ENCODE measurements at regions of chr11 and their contacts with region 1.

Region 1: GRCh38 chr11:114180301-114181055 is 115.7 kb upstream of the NNMT start:
- DNase-seq: peak; percentile 61
- H3K4me3 Mint-ChIP-seq: peak overlapping the region; percentile 74
- H3K27ac Mint-ChIP-seq: peak overlapping the region; percentile 99
- H3K4me1 Mint-ChIP-seq: peaks cover 81% of the 10 kb centered on the region
- H3K27me3 Mint-ChIP-seq: no peaks in the 10 kb centered on the region
- CTCF ChIP-seq: peak; percentile 70

Region 2: DNA sequence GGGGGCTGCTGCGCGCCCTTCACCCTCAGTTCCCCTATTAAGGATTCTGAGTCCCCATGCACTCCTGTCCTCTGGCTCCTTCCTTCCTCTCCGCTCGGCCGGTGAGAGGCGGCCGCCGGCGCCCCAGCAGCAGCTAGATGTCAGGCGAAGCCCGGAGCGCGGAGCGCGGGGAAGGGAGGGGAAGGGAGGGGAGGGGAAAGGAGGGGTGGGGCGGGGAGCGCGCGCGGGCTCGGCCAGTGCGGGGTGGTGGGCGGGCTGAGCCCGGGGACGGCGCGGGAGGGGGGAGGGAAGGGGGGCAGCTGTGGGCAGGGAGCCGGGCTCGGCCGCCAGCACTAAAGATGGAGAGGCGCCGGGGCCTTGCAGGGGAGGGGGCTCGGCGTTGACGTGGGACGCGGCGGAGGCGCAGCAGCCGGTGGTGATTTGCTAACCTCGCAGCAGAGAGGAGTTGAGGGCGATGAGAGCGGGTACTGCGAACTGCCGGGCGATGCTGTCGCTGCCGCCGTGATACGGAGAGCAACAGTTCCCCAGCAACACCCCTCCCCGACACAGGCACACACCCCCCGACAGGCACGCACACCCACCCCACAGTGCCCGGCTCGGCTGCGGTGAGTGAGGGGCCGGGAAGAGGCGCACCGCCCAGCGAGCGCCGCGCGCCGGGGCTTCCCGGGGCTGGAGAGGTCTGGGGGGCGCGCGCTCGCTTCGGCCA is 121.0 kb before region 1 on chr11 and contains the start of gene ZBTB16:
- CTCF ChIA-PET with region 1: interaction called, 7 read pairs
- POLR2A ChIA-PET with region 1: interaction called, 57 read pairs
- intact Hi-C with region 1: loop called (anchors 1 kb)
- DNase-seq: peak; percentile 86
- H3K4me3 Mint-ChIP-seq: peak within 1 kb of the TSS; percentile 95
- H3K27ac Mint-ChIP-seq: peak within 1 kb of the TSS; percentile 98
- H3K4me1 Mint-ChIP-seq: peaks cover 12% of the 10 kb centered on the region
- H3K27me3 Mint-ChIP-seq: no peaks in the 10 kb centered on the region
- CTCF ChIP-seq: peak; percentile 28
- total RNA-seq, gene ZBTB16: 70.4 and 75.3 TPM in 2 replicates

Region 3: GRCh38 chr11:114135737-114136151 is 44.7 kb before region 1 on chr11:
- CTCF ChIA-PET with region 1: interaction called, 6 read pairs
- POLR2A ChIA-PET with region 1: interaction called, 13 read pairs
- intact Hi-C with region 1: no loop called
- DNase-seq: no peak
- H3K4me3 Mint-ChIP-seq: no peak overlapping the region
- H3K27ac Mint-ChIP-seq: peak overlapping the region; percentile 86
- H3K4me1 Mint-ChIP-seq: peaks cover 64% of the 10 kb centered on the region
- H3K27me3 Mint-ChIP-seq: no peaks in the 10 kb centered on the region
- CTCF ChIP-seq: no peak

Region 4: GRCh38 chr11:114159802-114160632 is 20.5 kb before region 1 on chr11:
- CTCF ChIA-PET with region 1: interaction called, 4 read pairs
- POLR2A ChIA-PET with region 1: interaction called, 1,399 read pairs
- intact Hi-C with region 1: loop called (anchors 1 kb)
- DNase-seq: peak; percentile 100
- H3K4me3 Mint-ChIP-seq: peak overlapping the region; percentile 65
- H3K27ac Mint-ChIP-seq: peak overlapping the region; percentile 99
- H3K4me1 Mint-ChIP-seq: peaks cover 87% of the 10 kb centered on the region
- H3K27me3 Mint-ChIP-seq: no peaks in the 10 kb centered on the region
- CTCF ChIP-seq: peak; percentile 15

Region 5: DNA sequence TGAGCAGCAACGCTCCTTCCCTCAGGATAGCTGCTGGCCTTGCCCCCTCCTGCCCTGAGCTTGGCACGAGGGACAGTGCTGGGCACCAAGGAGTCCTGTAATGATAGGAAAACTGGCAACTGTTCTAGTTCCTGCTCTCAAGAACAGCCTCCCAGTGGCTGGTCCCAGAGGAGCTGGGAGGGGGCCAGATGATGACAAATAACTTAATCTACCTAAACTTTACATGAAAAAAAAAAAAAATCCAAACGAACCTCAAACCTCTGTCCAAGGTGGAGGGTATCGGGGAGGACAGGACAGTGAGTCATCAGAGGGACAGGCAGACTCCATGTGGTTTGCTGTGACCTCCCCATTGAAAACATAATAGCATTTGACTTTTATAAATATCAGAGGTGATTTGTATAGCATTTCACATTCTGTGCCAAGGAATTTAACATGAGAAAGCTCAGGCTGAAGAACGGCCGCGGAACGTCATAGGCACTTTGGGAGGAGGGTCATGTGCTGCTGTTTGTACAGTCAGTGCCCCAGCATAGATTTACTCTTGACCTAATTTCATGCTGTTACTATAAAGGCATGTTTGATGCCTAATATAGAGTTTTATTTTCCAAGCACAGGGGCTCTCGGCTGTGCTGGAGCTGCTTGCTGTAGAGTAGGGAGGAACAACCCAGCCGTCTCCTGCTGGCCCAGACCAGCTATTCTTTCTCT is 17.5 kb after region 1 on chr11:
- CTCF ChIA-PET with region 1: interaction called, 53 read pairs
- POLR2A ChIA-PET with region 1: interaction called, 398 read pairs
- intact Hi-C with region 1: no loop called
- DNase-seq: peak; percentile 95
- H3K4me3 Mint-ChIP-seq: peak overlapping the region; percentile 1
- H3K27ac Mint-ChIP-seq: peak overlapping the region; percentile 97
- H3K4me1 Mint-ChIP-seq: peaks cover 66% of the 10 kb centered on the region
- H3K27me3 Mint-ChIP-seq: no peaks in the 10 kb centered on the region
- CTCF ChIP-seq: no peak